GM12878 (cell line): ENCODE measurements at regions of chr3 and their contacts with region 1.

Region 1: GRCh38 chr3:122564155-122564912 is at the starts of genes DTX3L and PARP9:
- DNase-seq: no peak
- ATAC-seq: peak; percentile 82
- H3K4me3 ChIP-seq: peak within 1 kb of the TSS; percentile 57
- H3K27ac ChIP-seq: peak within 1 kb of the TSS; percentile 82
- H3K4me1 ChIP-seq: peaks cover 4% of the 10 kb centered on the region; the same call in 1 of the 2 replicates
- H3K27me3 ChIP-seq: no peaks in the 10 kb centered on the region
- CTCF ChIP-seq: no peak
- EP300 ChIP-seq: no peak
- POLR2A ChIP-seq: peak; percentile 83
- RAD21 ChIP-seq: no peak
- polyA plus RNA-seq, gene DTX3L: 9.9 to 14.6 TPM
- polyA plus RNA-seq, gene PARP9: 34.0 to 40.4 TPM

Region 2: DNA sequence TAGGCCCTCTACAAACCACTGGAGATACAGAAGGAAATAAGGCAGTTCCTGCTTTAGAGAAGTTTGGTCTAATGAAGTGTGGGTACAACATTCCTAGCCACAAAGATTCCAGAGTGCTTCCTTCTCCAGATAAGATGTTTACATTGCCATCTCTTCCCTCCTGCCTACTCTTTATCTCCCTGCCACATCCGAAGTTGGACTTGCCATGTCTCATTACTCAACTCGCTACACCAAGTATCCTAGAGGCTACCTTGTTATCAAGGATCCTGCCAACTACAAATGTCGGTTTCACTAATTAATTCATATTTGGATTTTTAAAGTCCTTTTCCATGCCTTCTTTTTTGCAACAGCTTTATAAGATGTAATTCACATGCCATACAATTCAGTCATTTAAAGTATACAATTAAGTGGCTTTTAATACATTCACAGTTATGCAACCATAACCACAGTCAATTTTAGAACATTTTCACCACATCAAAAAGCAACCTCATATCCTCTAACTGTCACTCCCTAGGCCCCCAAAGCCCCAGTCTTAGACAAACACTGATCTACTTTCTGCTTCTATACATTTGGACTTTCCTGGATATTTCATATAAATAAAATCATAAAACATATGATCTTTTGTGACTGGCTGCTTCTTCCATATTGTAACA is 293.0 kb before region 1 on chr3:
- CTCF ChIA-PET with region 1: no interaction called
- POLR2A ChIA-PET with region 1: no interaction called
- RAD21 ChIA-PET with region 1: no interaction called
- SMC1A ChIA-PET with region 1: interaction called, 3 read pairs
- in situ Hi-C with region 1: no loop called
- intact Hi-C with region 1: loop called (anchors 10 kb)
- DNase-seq: no peak
- ATAC-seq: peak; percentile 58
- H3K4me3 ChIP-seq: peak overlapping the region; percentile 17; the same call in 1 of the 2 replicates
- H3K27ac ChIP-seq: peak overlapping the region; percentile 43
- H3K4me1 ChIP-seq: peaks cover 38% of the 10 kb centered on the region
- H3K27me3 ChIP-seq: no peaks in the 10 kb centered on the region
- CTCF ChIP-seq: no peak
- EP300 ChIP-seq: peak in 1 of 2 experiments; percentile 85; a peak in 3 of 4 replicates
- POLR2A ChIP-seq: no peak
- RAD21 ChIP-seq: no peak

Region 3: GRCh38 chr3:122458992-122459391 is 105.3 kb before region 1 on chr3:
- CTCF ChIA-PET with region 1: interaction called, 10 read pairs
- POLR2A ChIA-PET with region 1: no interaction called
- RAD21 ChIA-PET with region 1: no interaction called
- SMC1A ChIA-PET with region 1: interaction called, 11 read pairs
- in situ Hi-C with region 1: no loop called
- intact Hi-C with region 1: no loop called
- DNase-seq: no peak
- ATAC-seq: 0 out of 3 replicates have a peak, but pooled peaks have one; percentile 30
- H3K4me3 ChIP-seq: no peak overlapping the region
- H3K27ac ChIP-seq: no peak overlapping the region
- H3K4me1 ChIP-seq: no peaks in the 10 kb centered on the region
- H3K27me3 ChIP-seq: no peaks in the 10 kb centered on the region
- CTCF ChIP-seq: peak in 2 of 3 experiments; percentile 15 to 44; a peak in 2 of 6 replicates
- EP300 ChIP-seq: no peak
- POLR2A ChIP-seq: no peak
- RAD21 ChIP-seq: peak; percentile 63

Region 4: GRCh38 chr3:122609798-122610559 is 45.6 kb after region 1 on chr3:
- CTCF ChIA-PET with region 1: interaction called, 3 read pairs
- POLR2A ChIA-PET with region 1: interaction called, 5 read pairs
- RAD21 ChIA-PET with region 1: interaction called, 5 read pairs
- SMC1A ChIA-PET with region 1: interaction called, 3 read pairs
- in situ Hi-C with region 1: no loop called
- intact Hi-C with region 1: loop called (anchors 2 kb)
- DNase-seq: peak; percentile 98
- ATAC-seq: peak; percentile 96
- H3K4me3 ChIP-seq: no peak overlapping the region
- H3K27ac ChIP-seq: peak overlapping the region; percentile 75
- H3K4me1 ChIP-seq: peaks cover 22% of the 10 kb centered on the region
- H3K27me3 ChIP-seq: no peaks in the 10 kb centered on the region
- CTCF ChIP-seq: no peak
- EP300 ChIP-seq: peak; percentile 91 to 99
- POLR2A ChIP-seq: no peak
- RAD21 ChIP-seq: no peak; the same call in 1 of the 2 replicates

Region 5: DNA sequence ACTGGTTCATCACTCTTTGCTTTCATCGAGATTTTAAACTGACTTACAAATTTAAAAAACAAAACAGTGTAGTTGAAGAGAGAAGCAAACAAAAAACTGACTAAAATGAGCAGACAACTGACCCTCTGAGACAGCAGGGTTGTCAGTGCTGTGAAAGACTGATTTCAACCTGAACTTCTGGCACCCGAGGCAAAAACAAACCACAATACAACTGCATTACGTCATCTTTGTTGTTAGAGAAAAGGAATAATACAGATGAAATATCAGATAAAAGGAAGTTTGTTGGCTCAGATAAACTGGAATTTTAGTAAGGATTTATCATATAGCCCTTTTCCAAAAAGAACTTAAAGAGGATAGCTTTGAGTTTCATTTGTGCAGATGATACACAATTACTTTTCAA is 64.2 kb after region 1 on chr3:
- CTCF ChIA-PET with region 1: interaction called, 4 read pairs
- POLR2A ChIA-PET with region 1: interaction called, 4 read pairs
- RAD21 ChIA-PET with region 1: interaction called, 10 read pairs
- SMC1A ChIA-PET with region 1: interaction called, 6 read pairs
- in situ Hi-C with region 1: no loop called
- intact Hi-C with region 1: no loop called
- DNase-seq: no peak
- ATAC-seq: no peak
- H3K4me3 ChIP-seq: no peak overlapping the region
- H3K27ac ChIP-seq: no peak overlapping the region
- H3K4me1 ChIP-seq: peaks cover 14% of the 10 kb centered on the region
- H3K27me3 ChIP-seq: no peaks in the 10 kb centered on the region
- CTCF ChIP-seq: no peak
- EP300 ChIP-seq: no peak
- POLR2A ChIP-seq: no peak
- RAD21 ChIP-seq: no peak

Region 6: GRCh38 chr3:122668930-122669730 is 104.8 kb after region 1 on chr3:
- CTCF ChIA-PET with region 1: interaction called, 15 read pairs
- POLR2A ChIA-PET with region 1: interaction called, 3 read pairs
- RAD21 ChIA-PET with region 1: interaction called, 8 read pairs
- SMC1A ChIA-PET with region 1: interaction called, 250 read pairs
- in situ Hi-C with region 1: no loop called
- intact Hi-C with region 1: no loop called
- DNase-seq: no peak
- ATAC-seq: peak; percentile 97
- H3K4me3 ChIP-seq: no peak overlapping the region
- H3K27ac ChIP-seq: peak overlapping the region; percentile 41; the same call in 1 of the 2 replicates
- H3K4me1 ChIP-seq: peaks cover 12% of the 10 kb centered on the region
- H3K27me3 ChIP-seq: no peaks in the 10 kb centered on the region
- CTCF ChIP-seq: no peak
- EP300 ChIP-seq: no peak
- POLR2A ChIP-seq: no peak
- RAD21 ChIP-seq: no peak

Region 7: DNA sequence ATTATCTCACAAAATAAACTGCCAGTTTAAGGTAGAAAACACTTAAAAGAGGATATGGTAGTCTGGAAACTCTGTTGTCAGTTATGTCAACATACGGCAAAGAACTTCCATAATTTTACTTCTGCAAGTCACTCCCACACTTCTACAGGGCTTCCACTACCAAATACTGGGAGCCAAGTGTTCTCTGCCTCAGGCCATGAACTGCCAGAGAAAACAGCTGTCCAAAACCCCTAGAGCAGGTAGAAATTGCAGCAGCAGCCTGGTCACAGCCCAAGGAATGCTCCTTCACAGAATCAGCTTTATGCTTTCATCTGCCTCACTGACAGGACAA is 203.7 kb after region 1 on chr3:
- CTCF ChIA-PET with region 1: no interaction called
- POLR2A ChIA-PET with region 1: no interaction called
- RAD21 ChIA-PET with region 1: no interaction called
- SMC1A ChIA-PET with region 1: no interaction called
- in situ Hi-C with region 1: no loop called
- intact Hi-C with region 1: no loop called
- DNase-seq: no peak
- ATAC-seq: no peak
- H3K4me3 ChIP-seq: no peak overlapping the region
- H3K27ac ChIP-seq: no peak overlapping the region
- H3K4me1 ChIP-seq: no peaks in the 10 kb centered on the region
- H3K27me3 ChIP-seq: no peaks in the 10 kb centered on the region
- CTCF ChIP-seq: no peak
- EP300 ChIP-seq: no peak
- POLR2A ChIP-seq: no peak
- RAD21 ChIP-seq: no peak

Region 8: GRCh38 chr3:123028233-123028828 is 464.0 kb after region 1 on chr3:
- CTCF ChIA-PET with region 1: no interaction called
- POLR2A ChIA-PET with region 1: interaction called, 3 read pairs
- RAD21 ChIA-PET with region 1: no interaction called
- SMC1A ChIA-PET with region 1: no interaction called
- in situ Hi-C with region 1: no loop called
- intact Hi-C with region 1: loop called (anchors 5 kb)
- DNase-seq: no peak
- ATAC-seq: peak; percentile 61
- H3K4me3 ChIP-seq: peak overlapping the region; percentile 50; the same call in 1 of the 2 replicates
- H3K27ac ChIP-seq: no peak overlapping the region
- H3K4me1 ChIP-seq: peaks cover 6% of the 10 kb centered on the region
- H3K27me3 ChIP-seq: peaks cover 18 to 33% of the 10 kb centered on the region in 2 experiments
- CTCF ChIP-seq: peak; percentile 35 to 67 (median 37); a peak in 4 of 6 replicates
- EP300 ChIP-seq: no peak
- POLR2A ChIP-seq: no peak
- RAD21 ChIP-seq: peak; percentile 73